ENCODE measurements at regions of chr12 and their contacts with region 1.

Region 1: GRCh38 chr12:4148418-4149056 is 125.0 kb upstream of the CCND2 start:
- DNase-seq: peak; percentile 80
- ATAC-seq: peak; percentile 83
- H3K4me3 Mint-ChIP-seq: peak overlapping the region; percentile 75
- H3K27ac Mint-ChIP-seq: peak overlapping the region; percentile 92
- H3K4me1 Mint-ChIP-seq: peaks cover 95% of the 10 kb centered on the region
- H3K27me3 Mint-ChIP-seq: no peaks in the 10 kb centered on the region
- CTCF ChIP-seq: no peak

Region 2: GRCh38 chr12:3872800-3873636 is 275.5 kb before region 1 on chr12 and contains the start of gene PARP11:
- CTCF ChIA-PET with region 1: no interaction called
- POLR2A ChIA-PET with region 1: interaction called, 9 read pairs
- intact Hi-C with region 1: loop called (anchors 5 kb)
- DNase-seq: peak; percentile 91
- ATAC-seq: peak; percentile 98
- H3K4me3 Mint-ChIP-seq: peak within 1 kb of the TSS; percentile 91
- H3K27ac Mint-ChIP-seq: peak within 1 kb of the TSS; percentile 93
- H3K4me1 Mint-ChIP-seq: peaks cover 48% of the 10 kb centered on the region
- H3K27me3 Mint-ChIP-seq: peaks cover 3% of the 10 kb centered on the region
- CTCF ChIP-seq: no peak
- total RNA-seq, gene PARP11: 21.4 and 27.2 TPM in 2 replicates

Region 3: GRCh38 chr12:4135919-4136605 is 12.5 kb before region 1 on chr12:
- CTCF ChIA-PET with region 1: interaction called, 4 read pairs
- POLR2A ChIA-PET with region 1: interaction called, 11 read pairs
- intact Hi-C with region 1: loop called (anchors 1 kb)
- DNase-seq: peak; percentile 46
- ATAC-seq: peak; percentile 83
- H3K4me3 Mint-ChIP-seq: peak overlapping the region; percentile 47
- H3K27ac Mint-ChIP-seq: peak overlapping the region; percentile 93
- H3K4me1 Mint-ChIP-seq: peaks cover 54% of the 10 kb centered on the region
- H3K27me3 Mint-ChIP-seq: no peaks in the 10 kb centered on the region
- CTCF ChIP-seq: no peak

Region 4: DNA sequence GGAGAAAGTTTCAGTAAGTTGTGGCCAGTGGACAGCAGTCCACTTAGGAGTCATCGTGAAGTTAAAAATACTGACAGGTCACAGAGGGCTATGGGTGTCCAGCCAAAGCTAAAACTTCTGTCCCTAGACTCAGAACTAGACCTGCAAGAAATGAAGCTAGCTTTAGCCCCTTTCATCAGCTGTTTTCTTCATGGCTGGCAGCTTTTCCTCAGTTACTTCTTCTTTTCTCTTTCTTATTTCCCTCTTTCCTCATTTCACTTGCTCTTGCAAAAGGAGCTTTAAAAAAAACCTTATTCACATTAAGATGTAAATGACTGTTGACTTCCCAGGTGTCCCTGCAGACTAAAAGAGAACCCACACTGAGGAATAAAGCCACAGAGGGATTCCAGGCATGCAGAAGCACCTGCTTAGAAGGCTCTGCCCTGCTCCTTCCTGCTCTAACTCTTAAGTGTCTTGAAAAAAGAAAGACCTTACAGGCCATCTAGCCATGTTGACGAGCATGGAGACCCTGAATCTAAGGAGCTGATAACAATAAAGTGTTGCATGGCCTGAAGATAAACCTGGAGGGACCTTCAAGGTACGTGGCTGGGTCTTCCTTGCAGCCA is 55.3 kb after region 1 on chr12:
- CTCF ChIA-PET with region 1: interaction called, 5 read pairs
- POLR2A ChIA-PET with region 1: interaction called, 7 read pairs
- intact Hi-C with region 1: loop called (anchors 1 kb)
- DNase-seq: no peak
- ATAC-seq: peak; percentile 15
- H3K4me3 Mint-ChIP-seq: peak overlapping the region; percentile 1
- H3K27ac Mint-ChIP-seq: peak overlapping the region; percentile 63
- H3K4me1 Mint-ChIP-seq: peaks cover 53% of the 10 kb centered on the region
- H3K27me3 Mint-ChIP-seq: no peaks in the 10 kb centered on the region
- CTCF ChIP-seq: no peak

Region 5: DNA sequence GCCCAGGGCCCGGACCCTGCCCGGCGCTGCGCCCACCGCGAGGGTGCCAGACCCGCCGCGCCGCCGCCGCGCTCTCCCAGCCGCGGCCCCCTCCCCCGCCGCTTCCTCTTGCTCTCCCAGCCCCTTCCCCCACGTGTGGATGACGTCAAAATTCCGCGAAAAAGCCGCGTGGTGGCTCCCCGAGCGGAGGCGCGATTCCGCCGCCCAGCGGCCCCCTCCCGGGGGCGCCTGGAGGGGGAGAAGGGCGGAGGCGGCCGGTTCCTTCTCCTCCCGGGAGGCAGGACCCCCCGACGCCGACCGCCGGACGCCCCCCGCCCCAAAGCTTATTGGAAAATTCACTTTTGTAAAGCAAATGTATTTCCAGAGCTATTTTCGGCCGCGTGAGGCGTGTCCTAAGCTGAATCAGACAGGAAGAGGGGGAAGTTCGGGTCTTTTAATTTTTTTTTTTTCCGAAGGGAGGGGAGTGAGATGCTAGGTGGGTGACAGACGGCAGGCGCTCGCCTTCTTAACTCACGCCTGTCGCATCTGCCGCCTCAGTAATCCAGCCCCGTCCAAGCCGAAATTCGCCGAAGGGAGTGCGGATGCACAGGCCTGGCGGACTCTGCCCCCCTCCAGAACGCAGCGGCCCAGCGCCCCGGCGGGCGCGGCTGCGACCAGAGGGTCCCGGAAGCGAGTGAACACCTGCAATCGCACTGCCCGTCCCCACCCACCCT is 120.9 kb after region 1 on chr12:
- CTCF ChIA-PET with region 1: interaction called, 10 read pairs
- POLR2A ChIA-PET with region 1: interaction called, 291 read pairs
- intact Hi-C with region 1: loop called (anchors 1 kb)
- DNase-seq: peak; percentile 84
- ATAC-seq: peak; percentile 30
- H3K4me3 Mint-ChIP-seq: peak overlapping the region; percentile 91
- H3K27ac Mint-ChIP-seq: peak overlapping the region; percentile 95
- H3K4me1 Mint-ChIP-seq: peaks cover 33% of the 10 kb centered on the region
- H3K27me3 Mint-ChIP-seq: no peaks in the 10 kb centered on the region
- CTCF ChIP-seq: no peak